Panc1 (cell line): ENCODE measurements at regions of chr19 and their contacts with region 1.

Region 1: DNA sequence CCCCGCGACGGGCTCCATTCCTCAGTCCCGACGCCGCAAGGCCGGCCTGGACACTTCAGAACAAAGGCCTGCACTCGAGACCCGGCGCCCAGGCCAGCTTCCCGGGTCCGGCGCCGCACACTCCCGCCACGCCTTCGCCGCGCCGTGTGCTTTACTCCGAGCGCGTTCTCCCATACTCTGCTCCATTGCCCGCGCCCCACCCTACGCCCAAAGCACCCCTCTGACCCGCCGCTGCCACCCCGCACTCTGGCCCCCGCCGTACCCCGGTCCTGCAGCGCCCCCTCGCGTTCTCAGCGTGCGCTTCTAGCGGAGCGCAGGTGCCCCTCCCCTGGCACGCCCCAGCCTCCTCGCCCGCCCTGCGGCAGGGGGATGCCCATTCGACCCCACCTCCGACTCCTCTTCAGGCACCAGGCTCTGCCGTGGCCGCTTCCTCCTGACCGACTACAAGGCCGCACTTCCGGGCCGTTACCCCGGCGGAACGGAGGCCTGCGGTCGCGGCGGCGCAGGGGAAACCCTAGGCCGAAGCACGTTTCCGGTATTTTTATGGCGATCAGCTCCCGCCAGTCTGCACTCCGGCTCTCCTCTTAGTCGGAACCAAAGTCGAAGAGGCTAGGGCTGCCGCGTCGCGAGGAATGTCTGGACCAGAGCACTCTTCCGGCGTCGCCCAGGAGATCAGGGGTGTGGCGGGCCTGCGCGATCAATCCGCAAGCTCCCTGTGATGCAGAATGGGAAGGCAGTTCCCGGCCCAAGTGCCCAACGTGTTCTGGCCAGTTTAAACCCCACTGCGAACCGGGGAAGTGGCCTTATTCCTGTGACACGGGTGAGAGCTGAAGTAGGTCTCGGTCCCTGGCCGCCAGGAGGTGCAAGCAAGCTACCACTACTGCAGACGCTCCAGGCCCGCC is at the start of gene ZBTB45:
- DNase-seq: peak; percentile 95
- ATAC-seq: peak; percentile 89
- H3K4me3 ChIP-seq: peak within 1 kb of the TSS; percentile 72 to 98
- H3K27ac ChIP-seq: peak within 1 kb of the TSS; percentile 99
- H3K4me1 ChIP-seq: peaks cover 30% of the 10 kb centered on the region
- H3K27me3 ChIP-seq: no peaks in the 10 kb centered on the region
- CTCF ChIP-seq: peak; percentile 95
- total RNA-seq, gene ZBTB45: 24.7 TPM

Region 2: GRCh38 chr19:58476498-58477015 is 43.0 kb before region 1 on chr19:
- CTCF ChIA-PET with region 1: no interaction called
- POLR2A ChIA-PET with region 1: interaction called, 10 read pairs
- in situ Hi-C with region 1: no loop called
- intact Hi-C with region 1: no loop called
- DNase-seq: no peak
- ATAC-seq: no peak
- H3K4me3 ChIP-seq: peak overlapping the region; percentile 76 to 78
- H3K27ac ChIP-seq: peak overlapping the region; percentile 92
- H3K4me1 ChIP-seq: peaks cover 14% of the 10 kb centered on the region
- H3K27me3 ChIP-seq: no peaks in the 10 kb centered on the region
- CTCF ChIP-seq: no peak

Region 3: GRCh38 chr19:58543826-58544590 is 24.4 kb after region 1 on chr19 and contains the start of gene TRIM28:
- CTCF ChIA-PET with region 1: interaction called, 11 read pairs
- POLR2A ChIA-PET with region 1: interaction called, 7 read pairs
- in situ Hi-C with region 1: no loop called
- intact Hi-C with region 1: no loop called
- DNase-seq: peak; percentile 97
- ATAC-seq: peak; percentile 97
- H3K4me3 ChIP-seq: peak within 1 kb of the TSS; percentile 91 to 100
- H3K27ac ChIP-seq: peak within 1 kb of the TSS; percentile 96
- H3K4me1 ChIP-seq: peaks cover 10% of the 10 kb centered on the region
- H3K27me3 ChIP-seq: peaks cover 4% of the 10 kb centered on the region
- CTCF ChIP-seq: no peak
- total RNA-seq, gene TRIM28: 767 TPM

Region 4: DNA sequence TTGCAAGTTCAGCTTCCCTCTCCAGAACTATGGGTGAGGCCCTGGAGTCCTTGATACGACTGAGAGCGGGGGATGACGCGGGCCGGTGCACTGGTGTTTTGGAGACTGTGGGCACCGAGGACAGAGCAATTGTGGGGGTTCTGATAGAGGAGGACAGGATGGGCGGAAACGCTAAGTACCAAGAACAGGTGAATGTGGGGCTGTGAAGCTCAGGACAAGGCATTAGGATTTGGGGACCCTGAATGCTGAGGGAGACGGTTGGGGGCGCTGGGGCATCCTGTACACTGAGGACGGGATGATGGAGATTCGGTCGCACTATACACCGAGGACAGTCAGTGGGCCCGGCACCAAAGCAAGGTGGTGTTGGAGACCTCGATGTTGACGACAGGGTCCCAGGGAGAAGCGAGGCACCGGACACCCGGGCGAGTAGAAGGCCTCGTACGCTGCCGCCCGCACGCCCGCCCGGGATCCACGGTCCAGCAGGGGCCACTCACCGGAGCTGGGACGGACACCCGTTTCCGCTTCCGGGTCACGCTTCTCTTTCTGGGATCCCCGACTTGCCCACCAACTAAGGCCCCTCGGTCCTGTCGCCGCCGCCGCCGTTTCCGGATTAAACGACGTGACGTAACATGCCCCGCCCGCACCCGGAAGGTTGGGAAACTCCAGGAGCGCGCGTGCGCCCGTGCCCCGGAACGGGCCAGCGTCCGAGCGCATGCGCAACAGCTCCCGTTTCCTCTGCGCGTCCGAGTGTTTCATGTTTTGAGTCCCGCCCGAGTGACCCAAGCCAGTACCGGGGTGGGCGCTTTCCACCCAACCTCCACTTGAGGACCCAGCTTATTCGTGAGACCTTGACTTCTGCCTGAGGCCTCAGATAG is 35.1 kb after region 1 on chr19 and contains the start of gene CHMP2A:
- CTCF ChIA-PET with region 1: interaction called, 7 read pairs
- POLR2A ChIA-PET with region 1: interaction called, 8 read pairs
- in situ Hi-C with region 1: no loop called
- intact Hi-C with region 1: loop called (anchors 1 kb)
- DNase-seq: peak; percentile 81
- ATAC-seq: peak; percentile 64
- H3K4me3 ChIP-seq: peak within 1 kb of the TSS; percentile 61 to 94
- H3K27ac ChIP-seq: peak within 1 kb of the TSS; percentile 98
- H3K4me1 ChIP-seq: peaks cover 31% of the 10 kb centered on the region
- H3K27me3 ChIP-seq: no peaks in the 10 kb centered on the region
- CTCF ChIP-seq: no peak
- total RNA-seq, gene CHMP2A: 191 TPM

Region 5: DNA sequence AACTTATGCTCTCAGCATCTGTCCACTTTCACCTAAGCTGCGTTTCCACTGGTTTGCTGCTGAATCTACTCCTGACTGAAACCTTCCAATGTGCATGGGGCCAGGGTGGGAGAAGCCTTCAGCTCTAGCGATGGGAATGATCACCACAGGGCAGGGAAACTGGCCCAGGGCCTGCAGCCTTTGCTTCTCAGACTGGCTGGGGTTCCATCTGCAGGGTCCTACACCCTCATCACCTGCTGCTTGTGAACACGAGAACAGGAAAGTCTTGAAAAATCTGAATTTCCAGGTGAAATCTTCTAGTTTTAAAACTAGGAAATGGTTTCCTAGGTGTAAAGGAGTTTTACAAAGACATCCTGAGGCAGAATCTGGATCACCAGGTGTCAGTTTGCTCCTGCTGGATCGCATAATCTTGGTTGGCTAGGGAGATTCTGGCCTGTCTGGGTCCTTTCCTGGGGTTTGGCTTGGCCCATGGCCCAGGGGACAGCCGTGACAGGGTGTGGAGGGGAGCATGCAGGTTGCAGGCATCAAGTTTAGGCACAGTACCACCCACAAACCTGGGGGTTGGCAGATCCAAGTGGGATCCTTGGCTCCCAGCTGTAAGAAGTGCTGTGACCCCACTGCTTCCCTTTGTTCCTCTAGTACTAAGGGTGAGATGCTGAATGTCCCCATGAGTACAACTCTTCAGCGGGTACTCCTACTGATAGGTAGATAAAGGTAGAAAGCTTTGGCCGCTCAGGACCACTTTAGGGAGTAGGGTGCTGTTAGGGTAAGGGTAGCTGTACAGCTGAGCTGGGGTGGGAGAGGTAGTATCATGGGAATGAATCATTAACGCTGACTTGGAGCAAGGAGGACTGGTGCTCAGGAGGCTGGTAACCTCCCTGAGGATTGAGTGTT is 40.6 kb after region 1 on chr19:
- CTCF ChIA-PET with region 1: interaction called, 7 read pairs
- POLR2A ChIA-PET with region 1: interaction called, 10 read pairs
- in situ Hi-C with region 1: no loop called
- intact Hi-C with region 1: loop called (anchors 1 kb)
- DNase-seq: no peak
- ATAC-seq: no peak
- H3K4me3 ChIP-seq: peak overlapping the region; percentile 66 to 77
- H3K27ac ChIP-seq: peak overlapping the region; percentile 100
- H3K4me1 ChIP-seq: peaks cover 31% of the 10 kb centered on the region
- H3K27me3 ChIP-seq: no peaks in the 10 kb centered on the region
- CTCF ChIP-seq: no peak